Posterior vena cava (tissue), 2 donors: ENCODE measurements at regions of chr7 and their contacts with region 1.

Region 1: GRCh38 chr7:30164567-30164966 is 29.8 kb downstream of the MTURN start:
- DNase-seq: no peak

Region 2: GRCh38 chr7:30284298-30285066 is 119.9 kb after region 1 on chr7 and contains the start of gene ZNRF2:
- intact Hi-C with region 1: loop called in 1 of 2 experiments (anchors 5 kb)
- DNase-seq: peak; percentile 99
- total RNA-seq, gene ZNRF2: 12.5 to 13.5 TPM

Region 3: DNA sequence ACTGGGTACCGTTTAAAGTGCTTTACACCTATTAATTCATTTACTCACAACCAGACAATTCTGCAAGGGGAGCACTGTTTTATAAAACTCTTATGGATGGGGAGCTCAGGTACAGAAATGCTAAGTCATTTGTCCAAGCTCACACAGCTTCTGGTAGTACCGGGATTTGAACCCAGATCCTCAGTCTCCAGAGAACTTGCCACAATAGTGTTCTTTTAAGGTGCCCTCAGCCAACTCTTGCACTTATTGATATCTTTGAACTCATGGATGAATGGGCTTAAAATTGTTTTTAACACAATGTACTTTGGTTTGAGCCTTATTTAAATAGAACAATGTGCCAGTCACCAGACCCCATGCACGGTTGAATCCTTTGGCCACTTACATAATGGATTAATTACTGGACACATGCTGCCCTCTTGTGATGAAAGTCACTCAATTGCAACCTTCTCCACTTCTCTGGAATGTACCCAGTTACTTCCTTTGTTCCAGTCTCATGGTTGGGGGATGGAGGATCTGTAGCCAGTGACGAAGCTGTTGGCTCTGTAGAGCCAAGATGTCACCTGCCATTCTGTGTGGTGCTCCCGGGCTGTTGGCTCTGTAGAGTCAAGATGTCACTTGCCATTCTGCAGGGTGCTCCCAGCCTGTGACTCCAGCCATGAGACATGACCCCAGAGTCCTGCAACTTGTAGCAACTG is 248.4 kb after region 1 on chr7:
- intact Hi-C with region 1: loop called in 1 of 2 experiments (anchors 5 kb)
- DNase-seq: no peak

Region 4: DNA sequence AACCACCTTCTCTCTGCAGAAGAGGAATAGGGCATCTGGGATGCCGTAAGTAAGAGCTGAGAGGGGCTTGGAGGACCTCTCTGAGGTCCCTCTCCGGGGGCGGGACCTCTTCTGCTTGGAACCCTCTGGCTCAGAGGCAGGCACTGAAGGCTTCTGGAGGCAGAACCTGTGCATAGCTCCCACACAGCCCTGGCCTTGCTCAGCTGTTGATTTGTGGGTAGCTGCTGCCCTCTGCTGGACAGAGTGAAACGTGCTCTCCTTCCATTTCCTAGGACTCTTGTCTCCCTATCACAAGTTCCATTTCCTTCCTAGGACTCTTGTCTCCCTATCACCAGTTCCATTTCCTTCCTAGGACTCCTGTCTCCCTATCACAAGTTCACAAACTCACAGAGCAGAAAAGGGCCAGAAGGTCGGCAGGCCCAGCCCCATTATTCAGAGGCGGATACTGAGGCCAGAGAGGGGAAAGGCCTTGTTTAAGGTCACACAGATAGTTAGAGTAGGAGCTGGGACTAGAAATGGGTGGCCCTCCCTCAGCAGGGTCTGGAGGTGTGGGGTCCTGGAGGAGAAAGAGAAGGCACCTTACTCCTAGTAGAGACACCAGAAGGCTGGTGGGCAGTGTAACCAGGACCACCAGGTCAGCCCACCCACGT is 399.8 kb after region 1 on chr7:
- intact Hi-C with region 1: loop called in 1 of 2 experiments (anchors 10 kb)
- DNase-seq: peak; percentile 93